Activated B cell treated with CpG ODN at 0.5 μM for 24 hours (primary cell): ENCODE measurements at regions of chr12 and their contacts with region 1.

Region 1: GRCh38 chr12:93183940-93184671 is 193.6 kb upstream of the NUDT4 start:
- DNase-seq: no peak
- ATAC-seq: peak; percentile 94
- H3K4me3 Mint-ChIP-seq: peak overlapping the region; percentile 40
- H3K27ac Mint-ChIP-seq: peak overlapping the region; percentile 86
- H3K4me1 Mint-ChIP-seq: peaks cover 50% of the 10 kb centered on the region
- H3K27me3 Mint-ChIP-seq: no peaks in the 10 kb centered on the region
- CTCF ChIP-seq: no peak

Region 2: DNA sequence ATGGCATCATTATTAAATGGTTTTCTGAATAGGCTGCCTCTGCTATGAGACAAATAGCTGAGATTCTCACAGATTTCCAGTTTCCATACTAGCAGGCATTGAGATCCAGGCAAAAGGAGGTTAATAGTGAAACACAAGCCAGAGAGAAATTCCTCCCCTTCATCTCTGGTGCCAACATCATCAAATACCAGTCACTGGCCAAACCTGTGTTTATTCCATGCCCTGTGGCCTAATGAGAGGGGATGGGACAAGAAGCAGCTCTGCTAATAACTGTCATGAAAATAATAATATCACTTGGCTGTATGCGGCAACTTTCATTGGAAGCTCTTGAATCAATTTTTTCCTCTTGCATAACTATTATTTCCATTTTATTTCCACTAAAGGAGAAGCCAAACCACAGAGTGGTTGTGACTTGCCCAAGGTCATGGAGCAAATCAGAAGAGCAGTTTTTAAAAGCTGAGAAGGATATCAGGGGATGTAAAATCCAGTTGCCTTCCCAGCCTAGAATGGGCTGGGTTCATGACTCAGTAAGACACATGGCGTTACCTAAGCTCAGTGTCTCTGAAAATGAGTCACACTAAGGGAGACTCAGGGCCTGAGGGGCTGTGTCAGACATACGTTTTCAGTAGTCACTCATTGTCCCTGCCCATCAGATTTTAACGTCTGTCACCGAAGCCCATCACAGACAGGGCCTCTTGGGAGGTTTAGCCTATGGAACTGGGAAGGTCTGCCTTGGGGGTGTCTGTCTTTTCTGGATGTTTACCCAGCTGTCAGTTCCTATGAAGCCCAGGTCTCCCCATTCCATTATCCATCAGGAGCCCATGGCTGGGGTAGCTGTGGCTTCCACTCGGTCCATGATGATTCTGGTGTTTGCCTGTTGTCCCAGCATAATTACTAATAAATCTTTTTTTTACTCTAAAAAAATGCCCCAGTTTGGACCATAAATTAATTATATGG is 46.2 kb before region 1 on chr12:
- CTCF ChIA-PET with region 1: no interaction called
- POLR2A ChIA-PET with region 1: interaction called, 3 read pairs
- intact Hi-C with region 1: loop called (anchors 5 kb)
- DNase-seq: no peak
- ATAC-seq: peak; percentile 40
- H3K4me3 Mint-ChIP-seq: peak overlapping the region; percentile 13
- H3K27ac Mint-ChIP-seq: peak overlapping the region; percentile 85
- H3K4me1 Mint-ChIP-seq: peaks cover 62% of the 10 kb centered on the region
- H3K27me3 Mint-ChIP-seq: no peaks in the 10 kb centered on the region
- CTCF ChIP-seq: no peak

Region 3: DNA sequence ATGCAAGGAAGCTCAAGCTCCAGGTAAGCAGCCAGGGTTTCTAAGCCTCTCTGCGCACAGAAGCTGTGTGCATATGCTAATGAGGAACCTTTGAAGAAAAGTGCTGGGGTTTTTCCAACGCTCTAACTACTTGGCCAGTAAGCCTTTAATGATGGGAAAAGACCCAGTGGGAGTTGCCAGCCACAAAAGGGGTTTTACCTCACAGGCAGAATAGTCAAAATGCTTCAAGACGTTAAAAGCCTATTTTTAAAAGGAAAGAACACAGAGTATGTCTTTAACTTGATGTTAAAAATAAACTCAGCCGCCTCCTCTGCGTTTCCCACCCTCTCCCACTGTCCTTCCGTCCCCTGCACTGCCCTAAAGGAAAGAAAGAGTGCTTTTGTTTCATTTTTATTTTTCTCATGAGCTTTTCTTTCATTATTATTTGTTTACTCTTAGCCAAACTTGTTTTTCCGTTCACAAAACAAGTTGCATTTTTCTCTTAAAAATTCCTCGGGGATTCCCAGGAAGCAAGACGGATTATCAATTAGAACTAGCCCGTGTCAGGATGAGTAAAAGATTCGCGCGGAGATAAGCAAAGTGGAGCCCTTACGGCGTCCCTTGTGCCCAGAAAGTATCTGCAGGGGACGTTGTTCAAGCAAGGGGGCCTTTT is 16.1 kb before region 1 on chr12:
- CTCF ChIA-PET with region 1: no interaction called
- POLR2A ChIA-PET with region 1: interaction called, 9 read pairs
- intact Hi-C with region 1: loop called (anchors 1 kb)
- DNase-seq: no peak
- ATAC-seq: peak; percentile 80
- H3K4me3 Mint-ChIP-seq: peak overlapping the region; percentile 80
- H3K27ac Mint-ChIP-seq: peak overlapping the region; percentile 80
- H3K4me1 Mint-ChIP-seq: peaks cover 60% of the 10 kb centered on the region
- H3K27me3 Mint-ChIP-seq: no peaks in the 10 kb centered on the region
- CTCF ChIP-seq: no peak

Region 4: DNA sequence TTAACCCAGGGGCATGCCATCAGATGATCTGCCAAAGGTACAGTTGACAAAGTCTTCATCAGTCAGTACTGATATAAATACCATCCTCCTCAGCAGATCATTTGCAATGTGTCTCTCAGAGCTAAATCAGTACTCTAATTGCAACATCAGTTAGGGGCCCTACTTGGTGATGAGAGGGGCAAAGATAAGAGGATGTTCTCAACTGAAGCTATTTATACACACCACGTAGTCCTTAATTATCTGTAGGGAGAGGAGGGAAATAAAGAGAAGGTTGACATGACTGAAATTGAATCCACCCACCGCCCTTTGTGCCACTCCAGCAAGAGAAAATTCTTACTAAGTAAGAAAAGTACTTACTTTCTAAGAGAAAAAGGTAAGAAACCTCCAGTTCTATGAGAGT is 35.8 kb after region 1 on chr12:
- CTCF ChIA-PET with region 1: no interaction called
- POLR2A ChIA-PET with region 1: no interaction called
- intact Hi-C with region 1: loop called (anchors 5 kb)
- DNase-seq: no peak
- ATAC-seq: no peak
- H3K4me3 Mint-ChIP-seq: no peak overlapping the region
- H3K27ac Mint-ChIP-seq: no peak overlapping the region
- H3K4me1 Mint-ChIP-seq: peaks cover 7% of the 10 kb centered on the region
- H3K27me3 Mint-ChIP-seq: no peaks in the 10 kb centered on the region
- CTCF ChIP-seq: no peak

Region 5: GRCh38 chr12:94640134-94640928 is 1456.2 kb after region 1 on chr12:
- CTCF ChIA-PET with region 1: no interaction called
- POLR2A ChIA-PET with region 1: no interaction called
- intact Hi-C with region 1: no loop called
- DNase-seq: no peak
- ATAC-seq: peak; percentile 30
- H3K4me3 Mint-ChIP-seq: no peak overlapping the region
- H3K27ac Mint-ChIP-seq: peak overlapping the region; percentile 47
- H3K4me1 Mint-ChIP-seq: peaks cover 31% of the 10 kb centered on the region
- H3K27me3 Mint-ChIP-seq: no peaks in the 10 kb centered on the region
- CTCF ChIP-seq: no peak